CD8-positive, alpha-beta memory T cell (primary cell): ENCODE measurements at regions of chr13 and their contacts with region 1.

Region 1: GRCh38 chr13:22801402-22802003 is 379.3 kb upstream of the SGCG start:
- DNase-seq: no peak
- H3K4me3 ChIP-seq: no peak overlapping the region
- H3K4me3 Mint-ChIP-seq: no peak overlapping the region
- H3K27ac ChIP-seq: no peak overlapping the region
- H3K27ac Mint-ChIP-seq: no peak overlapping the region
- H3K4me1 ChIP-seq: no peaks in the 10 kb centered on the region
- H3K4me1 Mint-ChIP-seq: no peaks in the 10 kb centered on the region
- H3K27me3 ChIP-seq: no peaks in the 10 kb centered on the region
- H3K27me3 Mint-ChIP-seq: peaks cover 3 to 15% of the 10 kb centered on the region in 2 donors

Region 2: DNA sequence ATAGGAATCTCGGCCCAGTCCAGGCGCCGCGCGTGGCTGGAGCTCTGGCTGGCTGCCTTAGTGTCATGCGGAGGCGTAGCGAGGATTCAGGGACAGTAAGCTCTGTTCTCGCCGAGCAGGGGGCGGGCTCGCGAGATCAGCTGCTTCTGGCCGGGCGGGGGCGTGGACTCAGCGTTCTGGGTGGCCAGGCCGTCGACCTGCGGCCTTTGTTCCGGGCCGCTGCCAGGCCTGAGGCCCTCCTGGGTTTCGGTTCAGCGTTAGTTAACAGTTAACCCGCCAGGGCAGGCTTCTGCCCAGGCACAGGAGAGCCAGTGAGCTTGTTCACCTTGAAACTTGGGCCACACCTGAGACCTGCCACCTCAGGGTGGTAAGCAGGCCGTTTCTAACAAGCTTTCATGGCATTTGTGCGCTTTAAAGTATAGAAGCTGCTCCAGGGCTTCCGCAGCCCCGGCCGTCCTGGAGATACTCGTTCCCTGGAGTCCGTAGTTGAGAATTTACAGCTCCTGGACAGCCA is 47.1 kb after region 1 on chr13:
- CTCF ChIA-PET with region 1: no interaction called
- POLR2A ChIA-PET with region 1: interaction called, 12 read pairs
- DNase-seq: no peak
- H3K4me3 ChIP-seq: no peak overlapping the region
- H3K4me3 Mint-ChIP-seq: no peak overlapping the region
- H3K27ac ChIP-seq: no peak overlapping the region
- H3K27ac Mint-ChIP-seq: no peak overlapping the region
- H3K4me1 ChIP-seq: no peaks in the 10 kb centered on the region
- H3K4me1 Mint-ChIP-seq: no peaks in the 10 kb centered on the region
- H3K27me3 ChIP-seq: no peaks in the 10 kb centered on the region
- H3K27me3 Mint-ChIP-seq: no peaks in the 10 kb centered on the region